Spleen (tissue), 13 donors: ENCODE measurements at regions of chr9 and their contacts with region 1.

Region 1: GRCh38 chr9:131747356-131747755 is 7.5 kb upstream of the RAPGEF1 start:
- DNase-seq: no peak
- H3K4me3 ChIP-seq: no peak overlapping the region
- H3K27ac ChIP-seq: no peak overlapping the region
- H3K4me1 ChIP-seq: peaks cover 0 to 32% (median 13%) of the 10 kb centered on the region in 6 donors
- H3K27me3 ChIP-seq: no peaks in the 10 kb centered on the region
- CTCF ChIP-seq: peak; percentile 12 to 63 (median 48)
- POLR2A ChIP-seq: no peak

Region 2: DNA sequence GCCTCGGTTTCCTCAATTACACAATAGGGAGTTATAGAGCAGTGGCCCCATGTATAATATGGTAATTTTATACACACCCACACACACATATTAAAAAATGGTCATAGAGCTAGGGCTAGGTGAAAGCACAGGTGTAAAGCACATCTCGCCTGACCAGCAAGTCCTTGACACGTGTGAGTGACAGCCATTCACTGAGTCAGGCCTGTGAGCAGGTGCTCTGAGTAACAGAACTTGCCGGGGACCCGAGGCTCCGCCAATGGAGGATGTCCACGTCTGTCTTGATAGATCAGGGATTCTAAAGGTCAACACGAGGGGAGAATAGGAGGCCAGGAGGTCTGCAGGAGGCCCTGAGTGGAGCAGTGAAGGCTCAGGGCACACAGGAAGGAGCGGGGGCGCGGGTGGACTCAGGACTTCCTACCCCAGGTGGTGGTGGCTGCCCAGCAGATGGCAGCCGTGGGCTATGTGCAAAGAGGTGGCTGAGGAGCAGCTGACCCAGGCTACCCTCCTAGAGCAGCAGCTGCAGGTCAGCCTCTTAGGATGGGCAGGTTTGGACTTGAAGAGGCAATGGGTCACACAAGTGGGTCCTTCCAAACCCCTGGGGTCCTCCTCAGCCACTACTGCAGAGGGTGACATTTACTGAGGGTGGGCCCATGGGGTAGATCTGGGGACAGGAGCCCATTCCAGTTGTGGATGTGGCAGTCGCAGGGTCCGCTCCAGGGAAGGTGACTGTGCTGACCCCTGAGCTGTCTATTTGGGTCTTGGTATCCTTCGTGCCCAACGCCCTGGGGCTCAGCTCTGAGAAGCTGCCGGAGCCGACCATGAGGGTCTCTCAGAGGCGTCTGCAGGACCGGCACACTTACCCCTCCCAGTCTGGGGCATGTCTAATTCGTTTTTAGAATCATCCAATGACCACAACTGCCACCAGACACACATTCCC is 156.2 kb before region 1 on chr9:
- intact Hi-C with region 1: loop called (anchors 5 kb)
- DNase-seq: peak; percentile 97
- H3K4me3 ChIP-seq: no peak overlapping the region
- H3K27ac ChIP-seq: peak overlapping the region in 5 of 8 donors; percentile 20 to 74 (median 52)
- H3K4me1 ChIP-seq: peaks cover 11 to 48% (median 18%) of the 10 kb centered on the region in 6 donors
- H3K27me3 ChIP-seq: no peaks in the 10 kb centered on the region
- CTCF ChIP-seq: peak; percentile 78 to 96 (median 91)
- POLR2A ChIP-seq: no peak